ENCODE measurements at regions of chr12 and their contacts with region 1.

Region 1: DNA sequence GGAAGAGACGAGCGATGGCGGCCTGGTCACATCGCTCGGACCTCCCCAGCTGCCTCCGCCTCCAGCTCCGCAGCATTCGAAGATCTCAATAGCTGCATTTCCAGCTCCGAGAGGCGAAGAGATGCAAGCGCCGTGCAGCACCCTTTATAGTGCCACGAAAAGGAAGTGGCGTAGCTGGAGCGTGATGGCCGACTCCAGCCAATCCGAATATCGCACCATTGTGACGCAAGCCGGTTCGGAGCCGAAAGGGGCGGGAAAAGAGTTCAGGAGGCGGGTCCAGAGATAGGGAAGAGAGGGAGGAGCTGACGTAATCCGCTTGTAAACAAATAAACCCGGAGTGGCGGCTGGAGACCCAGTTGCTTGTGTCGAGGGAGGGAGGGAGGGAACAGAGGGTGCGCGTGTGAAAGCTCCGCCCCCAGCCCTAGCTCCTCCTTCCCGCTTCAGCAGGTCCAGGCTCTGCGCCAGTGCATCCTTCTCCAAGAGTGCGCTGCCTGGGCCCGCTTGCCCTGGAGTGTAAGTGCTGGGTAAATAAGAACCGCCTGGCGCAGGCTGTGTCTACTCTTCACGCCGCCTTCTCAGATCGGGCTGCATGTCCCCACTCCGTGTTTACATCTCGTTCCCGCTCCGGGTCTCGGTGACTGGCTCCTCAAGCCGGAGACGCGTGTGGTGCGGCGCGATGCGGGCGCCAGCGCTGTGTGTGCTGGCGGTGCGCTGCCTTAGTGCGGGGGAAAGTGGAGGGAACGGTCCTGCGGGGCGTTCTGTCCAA is at the start of gene BTG1:
- DNase-seq: peak; percentile 99
- H3K4me3 ChIP-seq: peak within 1 kb of the TSS; percentile 77 to 100
- H3K27ac ChIP-seq: peak within 1 kb of the TSS; percentile 98 to 100
- H3K4me1 ChIP-seq: no peaks in the 10 kb centered on the region
- H3K27me3 ChIP-seq: no peaks in the 10 kb centered on the region
- CTCF ChIP-seq: peak in 2 of 4 experiments; percentile 34 to 41
- POLR2A ChIP-seq: peak; percentile 97
- total RNA-seq, gene BTG1: 52.7 to 56.9 TPM

Region 2: DNA sequence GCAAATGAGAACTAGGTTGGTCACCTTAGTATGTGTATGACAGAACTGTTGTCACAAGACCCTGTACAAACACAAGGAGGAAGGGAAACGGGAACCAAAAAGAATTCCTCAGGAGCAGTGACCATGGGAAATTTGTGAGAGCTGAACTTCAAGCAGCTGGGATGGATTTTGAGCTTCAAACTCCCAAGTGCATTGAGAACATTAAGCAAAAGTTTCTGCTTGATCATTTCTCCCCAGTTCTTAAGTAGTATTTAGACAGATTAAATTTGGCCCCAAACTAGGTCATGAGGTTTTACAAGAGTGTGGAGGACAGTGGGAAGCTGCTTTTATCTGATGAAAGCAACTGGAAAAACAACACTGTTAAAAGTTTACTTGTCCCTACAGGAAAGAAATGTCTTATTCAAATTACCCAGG is 757.4 kb before region 1 on chr12:
- intact Hi-C with region 1: loop called (anchors 5 kb)
- DNase-seq: peak; percentile 58
- H3K4me3 ChIP-seq: no peak overlapping the region
- H3K27ac ChIP-seq: peak overlapping the region; percentile 80 to 82
- H3K4me1 ChIP-seq: peaks cover 19% of the 10 kb centered on the region
- H3K27me3 ChIP-seq: no peaks in the 10 kb centered on the region
- CTCF ChIP-seq: no peak
- POLR2A ChIP-seq: no peak

Region 3: GRCh38 chr12:91577586-91578539 is 568.1 kb before region 1 on chr12:
- intact Hi-C with region 1: loop called (anchors 10 kb)
- DNase-seq: no peak
- H3K4me3 ChIP-seq: no peak overlapping the region
- H3K27ac ChIP-seq: no peak overlapping the region
- H3K4me1 ChIP-seq: no peaks in the 10 kb centered on the region
- H3K27me3 ChIP-seq: no peaks in the 10 kb centered on the region
- CTCF ChIP-seq: peak; percentile 28 to 74 (median 66)
- POLR2A ChIP-seq: no peak

Region 4: GRCh38 chr12:91811481-91812287 is 334.2 kb before region 1 on chr12:
- intact Hi-C with region 1: loop called (anchors 10 kb)
- DNase-seq: peak; percentile 50
- H3K4me3 ChIP-seq: no peak overlapping the region
- H3K27ac ChIP-seq: no peak overlapping the region
- H3K4me1 ChIP-seq: no peaks in the 10 kb centered on the region
- H3K27me3 ChIP-seq: no peaks in the 10 kb centered on the region
- CTCF ChIP-seq: peak; percentile 62 to 83 (median 72)
- POLR2A ChIP-seq: no peak

Region 5: GRCh38 chr12:92032965-92033364 is 112.9 kb before region 1 on chr12:
- intact Hi-C with region 1: loop called (anchors 2 kb)
- DNase-seq: no peak
- H3K4me3 ChIP-seq: no peak overlapping the region
- H3K27ac ChIP-seq: peak overlapping the region; percentile 48 to 82
- H3K4me1 ChIP-seq: peaks cover 13% of the 10 kb centered on the region
- H3K27me3 ChIP-seq: no peaks in the 10 kb centered on the region
- CTCF ChIP-seq: no peak
- POLR2A ChIP-seq: no peak

Region 6: GRCh38 chr12:92078167-92079053 is 67.5 kb before region 1 on chr12:
- intact Hi-C with region 1: no loop called
- DNase-seq: no peak
- H3K4me3 ChIP-seq: no peak overlapping the region
- H3K27ac ChIP-seq: no peak overlapping the region
- H3K4me1 ChIP-seq: no peaks in the 10 kb centered on the region
- H3K27me3 ChIP-seq: no peaks in the 10 kb centered on the region
- CTCF ChIP-seq: no peak
- POLR2A ChIP-seq: no peak

Region 7: DNA sequence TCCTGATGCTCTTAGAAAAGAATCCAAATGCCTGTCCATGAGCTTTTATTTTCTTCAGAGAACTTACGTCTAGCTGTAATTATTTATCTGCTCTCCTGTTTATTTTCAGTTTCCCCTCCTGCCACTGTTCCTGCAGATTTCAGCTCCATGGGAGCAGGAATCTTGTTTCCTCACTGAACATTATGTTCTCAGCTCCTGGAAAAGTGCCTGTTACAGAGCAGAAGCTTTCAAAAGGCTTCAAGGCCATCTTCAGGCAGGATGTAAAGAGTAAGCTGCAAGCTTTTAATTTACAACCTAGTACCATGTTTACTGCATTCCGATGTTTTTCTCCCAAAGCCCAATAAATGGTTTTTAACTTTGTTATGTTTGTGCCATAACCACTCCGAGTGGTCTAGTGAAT is 98.1 kb after region 1 on chr12:
- intact Hi-C with region 1: loop called (anchors 5 kb)
- DNase-seq: peak; percentile 54
- H3K4me3 ChIP-seq: no peak overlapping the region
- H3K27ac ChIP-seq: peak overlapping the region; percentile 33 to 55
- H3K4me1 ChIP-seq: no peaks in the 10 kb centered on the region
- H3K27me3 ChIP-seq: no peaks in the 10 kb centered on the region
- CTCF ChIP-seq: peak in 2 of 4 experiments; percentile 22 to 38
- POLR2A ChIP-seq: no peak

Region 8: DNA sequence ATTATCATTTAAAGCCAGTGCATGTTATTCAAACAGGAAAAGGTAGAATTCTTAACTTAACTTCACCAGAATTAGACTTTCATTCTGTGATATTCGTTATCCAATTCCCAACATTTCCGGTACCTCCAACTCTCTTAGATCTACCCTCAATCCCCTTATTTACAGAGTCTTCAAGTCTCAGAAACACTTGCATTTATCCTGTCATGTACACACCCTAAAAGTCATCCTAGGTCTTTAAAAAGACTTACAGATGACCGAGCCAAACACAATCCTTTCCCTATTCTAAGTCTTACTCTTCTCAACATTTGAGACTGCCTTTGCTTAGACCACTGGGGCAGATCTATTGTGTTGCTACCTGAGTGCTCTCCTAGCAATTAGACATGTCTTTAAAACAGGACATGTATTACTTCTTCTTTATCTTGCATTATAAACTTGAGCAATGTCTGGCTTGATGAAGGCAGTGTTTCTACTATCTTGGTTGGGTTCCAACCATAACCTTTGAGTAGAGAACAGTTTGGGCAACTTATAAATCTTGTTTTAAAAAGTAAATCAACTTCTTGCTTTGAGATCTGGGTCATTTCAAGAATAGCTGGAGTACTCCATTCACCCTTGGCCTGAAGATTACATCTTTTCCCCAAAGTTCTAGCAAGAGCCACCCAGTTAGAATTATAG is 416.3 kb after region 1 on chr12:
- intact Hi-C with region 1: loop called (anchors 2 kb)
- DNase-seq: no peak
- H3K4me3 ChIP-seq: no peak overlapping the region
- H3K27ac ChIP-seq: no peak overlapping the region
- H3K4me1 ChIP-seq: no peaks in the 10 kb centered on the region
- H3K27me3 ChIP-seq: no peaks in the 10 kb centered on the region
- CTCF ChIP-seq: no peak
- POLR2A ChIP-seq: no peak

Measured in prostate gland (tissue), 2 donors.